Activated CD4-positive, alpha-beta T cell treated with anti-CD3 and anti-CD28 coated beads, Interleukin-2, amount 10 ng/mL, durations not matched to agents 24 days and 14 days (primary cell): ENCODE measurements at regions of chr1 and their contacts with region 1.

Region 1: DNA sequence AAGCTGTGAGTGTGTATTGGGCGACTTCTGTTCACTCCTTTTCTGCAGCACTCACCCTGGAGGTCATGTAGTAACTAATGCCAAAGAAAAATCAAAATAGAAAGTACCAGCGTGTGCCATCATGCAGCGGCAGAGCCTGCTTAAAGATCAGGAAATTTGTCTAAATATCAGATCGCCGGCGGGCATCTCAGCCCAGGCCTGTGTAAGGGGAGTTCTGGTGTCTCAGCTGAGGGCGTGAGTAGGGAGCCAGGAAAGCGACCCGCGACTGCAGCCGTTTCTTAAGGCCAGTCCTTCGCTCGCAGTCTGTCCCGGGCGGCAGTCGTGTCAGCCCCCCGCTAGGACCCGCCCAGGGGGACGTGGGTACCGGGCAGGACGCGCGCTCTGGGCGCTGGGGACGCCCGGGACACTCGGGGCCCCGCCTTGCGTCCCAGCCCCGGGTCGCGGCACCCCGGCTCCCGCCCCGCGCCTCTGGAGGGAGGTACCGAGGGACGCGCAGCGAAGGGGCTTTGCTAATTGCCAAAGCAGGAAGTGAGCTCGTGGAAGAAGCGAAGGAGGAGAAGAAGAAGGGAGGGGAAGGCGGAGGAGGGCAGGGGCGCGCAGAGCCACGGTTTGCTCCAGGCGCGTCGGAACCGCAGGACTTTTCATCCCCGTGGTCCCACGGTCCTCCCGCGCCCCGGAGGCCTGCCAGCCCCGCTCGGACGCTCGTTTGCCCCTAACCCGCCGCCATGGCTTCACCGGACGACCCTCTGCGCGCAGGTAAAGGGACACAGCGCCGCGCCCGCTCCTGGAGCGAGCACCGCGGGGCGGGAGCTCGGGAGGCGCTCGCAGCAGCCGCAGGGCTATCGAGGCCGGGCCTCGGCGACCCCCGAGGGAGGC is 1.1 kb downstream of the EDARADD start:
- DNase-seq: peak; percentile 89
- H3K4me3 Mint-ChIP-seq: peak overlapping the region; percentile 96
- H3K27ac Mint-ChIP-seq: peak overlapping the region; percentile 91
- H3K4me1 Mint-ChIP-seq: peaks cover 40% of the 10 kb centered on the region
- H3K27me3 Mint-ChIP-seq: peaks cover 26% of the 10 kb centered on the region

Region 2: GRCh38 chr1:235878082-235878811 is 516.9 kb before region 1 on chr1:
- intact Hi-C with region 1: loop called (anchors 10 kb)
- DNase-seq: peak; percentile 58
- H3K4me3 Mint-ChIP-seq: peak overlapping the region; percentile 15
- H3K27ac Mint-ChIP-seq: peak overlapping the region; percentile 92
- H3K4me1 Mint-ChIP-seq: peaks cover 71% of the 10 kb centered on the region
- H3K27me3 Mint-ChIP-seq: no peaks in the 10 kb centered on the region

Region 3: DNA sequence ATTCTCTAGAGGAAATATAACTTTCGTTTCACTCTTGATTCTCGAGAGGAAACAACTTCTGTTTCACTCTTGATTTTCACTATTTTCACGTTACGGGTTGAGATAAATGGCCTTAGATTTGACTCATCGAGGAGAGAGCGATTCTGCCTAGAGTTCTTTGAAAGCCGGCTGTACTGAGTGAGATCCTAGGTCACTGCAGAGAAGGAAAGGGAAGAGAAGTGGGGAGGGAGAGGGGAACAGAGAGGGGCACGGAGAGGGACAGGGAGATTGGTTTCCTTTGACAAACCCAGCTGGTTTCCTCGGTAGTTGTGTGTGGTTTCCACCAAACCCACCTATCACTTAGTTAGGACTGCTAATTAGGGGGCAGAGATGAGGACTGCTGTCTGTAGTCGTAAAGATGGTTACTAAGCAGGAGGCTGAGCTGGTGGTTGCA is 274.4 kb before region 1 on chr1:
- intact Hi-C with region 1: loop called (anchors 1 kb)
- DNase-seq: peak; percentile 69
- H3K4me3 Mint-ChIP-seq: peak overlapping the region; percentile 70
- H3K27ac Mint-ChIP-seq: peak overlapping the region; percentile 34
- H3K4me1 Mint-ChIP-seq: peaks cover 33% of the 10 kb centered on the region
- H3K27me3 Mint-ChIP-seq: peaks cover 20% of the 10 kb centered on the region

Region 4: GRCh38 chr1:236370420-236370819 is 24.7 kb before region 1 on chr1:
- intact Hi-C with region 1: loop called (anchors 2 kb)
- DNase-seq: no peak
- H3K4me3 Mint-ChIP-seq: no peak overlapping the region
- H3K27ac Mint-ChIP-seq: no peak overlapping the region
- H3K4me1 Mint-ChIP-seq: peaks cover 2% of the 10 kb centered on the region
- H3K27me3 Mint-ChIP-seq: peaks cover 12% of the 10 kb centered on the region

Region 5: DNA sequence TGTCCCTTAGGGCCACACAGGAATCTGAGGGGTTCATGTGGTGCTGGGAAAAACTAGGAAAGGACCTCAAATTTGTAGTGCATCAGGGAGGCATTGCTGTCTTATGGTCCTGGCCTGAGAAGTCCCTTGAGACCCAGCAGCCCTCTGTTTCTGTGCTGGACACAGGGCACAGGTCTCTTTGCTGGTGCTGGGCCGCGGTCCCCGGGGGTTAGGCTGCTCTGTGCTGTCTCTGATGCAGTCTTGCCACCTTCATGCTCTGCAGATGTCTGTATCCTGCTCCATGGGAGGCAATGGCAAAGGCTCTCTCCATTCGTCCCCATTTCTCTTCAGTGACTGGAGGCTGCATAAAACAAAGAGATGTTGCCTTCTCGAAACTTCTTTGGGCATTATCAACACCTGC is 11.9 kb after region 1 on chr1:
- intact Hi-C with region 1: no loop called
- DNase-seq: no peak
- H3K4me3 Mint-ChIP-seq: no peak overlapping the region
- H3K27ac Mint-ChIP-seq: no peak overlapping the region
- H3K4me1 Mint-ChIP-seq: no peaks in the 10 kb centered on the region
- H3K27me3 Mint-ChIP-seq: no peaks in the 10 kb centered on the region

Region 6: GRCh38 chr1:236523701-236524141 is 128.6 kb after region 1 on chr1 and contains the start of gene LGALS8:
- intact Hi-C with region 1: loop called (anchors 5 kb)
- DNase-seq: peak; percentile 95
- H3K4me3 Mint-ChIP-seq: peak within 1 kb of the TSS; percentile 93
- H3K27ac Mint-ChIP-seq: peak within 1 kb of the TSS; percentile 98
- H3K4me1 Mint-ChIP-seq: peaks cover 19% of the 10 kb centered on the region
- H3K27me3 Mint-ChIP-seq: no peaks in the 10 kb centered on the region
- total RNA-seq, gene LGALS8: 68.9 and 71.9 TPM in 2 replicates